Vagina (tissue), 2 donors: ENCODE measurements at regions of chr5 and their contacts with region 1.

Region 1: GRCh38 chr5:104998572-104998971 is 1436.0 kb upstream of the NUDT12 start:
- DNase-seq: no peak
- H3K4me3 ChIP-seq: no peak overlapping the region
- H3K27ac ChIP-seq: no peak overlapping the region
- H3K4me1 ChIP-seq: no peaks in the 10 kb centered on the region
- H3K27me3 ChIP-seq: no peaks in the 10 kb centered on the region
- CTCF ChIP-seq: no peak
- POLR2A ChIP-seq: no peak

Region 2: DNA sequence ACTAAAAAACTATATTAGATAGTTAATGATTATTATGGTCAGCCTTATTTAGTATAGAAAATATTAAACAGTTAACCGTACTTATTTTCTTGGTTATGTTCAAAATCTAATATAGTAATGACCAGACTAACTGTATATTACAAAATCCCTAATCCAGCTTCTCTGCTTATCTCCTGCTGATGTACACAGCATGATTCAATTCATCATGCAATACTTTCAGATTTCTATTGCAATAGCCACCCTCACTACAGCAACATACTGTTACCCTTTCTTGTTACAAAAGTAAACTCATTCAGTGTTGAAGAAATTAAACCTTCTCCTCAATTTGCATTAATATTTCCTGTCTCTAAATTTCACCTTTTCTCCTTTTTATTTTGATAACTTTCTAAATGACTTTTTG is 61.0 kb before region 1 on chr5:
- intact Hi-C with region 1: loop called (anchors 2 kb)
- DNase-seq: no peak
- H3K4me3 ChIP-seq: no peak overlapping the region
- H3K27ac ChIP-seq: no peak overlapping the region
- H3K4me1 ChIP-seq: no peaks in the 10 kb centered on the region
- H3K27me3 ChIP-seq: no peaks in the 10 kb centered on the region
- CTCF ChIP-seq: no peak
- POLR2A ChIP-seq: no peak